Sigmoid colon (tissue), 7 donors: ENCODE measurements at regions of chr2 and their contacts with region 1.

Region 1: DNA sequence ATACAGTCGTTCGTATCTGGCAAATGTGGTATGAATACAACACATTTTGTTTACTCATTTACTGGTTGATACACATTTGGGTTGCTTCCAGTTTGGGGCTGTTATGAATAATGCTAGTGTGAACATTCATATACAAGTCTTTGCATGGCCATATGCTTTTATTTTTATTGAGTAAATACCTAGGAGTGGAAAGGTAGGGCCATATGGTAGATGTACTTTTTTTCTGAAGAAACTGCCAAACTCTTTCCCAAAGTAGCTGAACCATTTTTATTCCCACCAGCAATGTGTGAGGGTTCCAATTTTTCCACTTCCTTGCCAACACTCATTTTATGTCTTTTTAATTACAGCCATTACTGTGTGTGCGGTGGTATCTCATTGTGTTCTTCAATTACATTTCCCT is 496.2 kb upstream of the NRXN1 start:
- DNase-seq: no peak
- H3K4me3 ChIP-seq: no peak overlapping the region
- H3K27ac ChIP-seq: no peak overlapping the region
- H3K4me1 ChIP-seq: no peaks in the 10 kb centered on the region
- H3K27me3 ChIP-seq: no peaks in the 10 kb centered on the region
- CTCF ChIP-seq: no peak
- EP300 ChIP-seq: no peak
- POLR2A ChIP-seq: no peak

Region 2: DNA sequence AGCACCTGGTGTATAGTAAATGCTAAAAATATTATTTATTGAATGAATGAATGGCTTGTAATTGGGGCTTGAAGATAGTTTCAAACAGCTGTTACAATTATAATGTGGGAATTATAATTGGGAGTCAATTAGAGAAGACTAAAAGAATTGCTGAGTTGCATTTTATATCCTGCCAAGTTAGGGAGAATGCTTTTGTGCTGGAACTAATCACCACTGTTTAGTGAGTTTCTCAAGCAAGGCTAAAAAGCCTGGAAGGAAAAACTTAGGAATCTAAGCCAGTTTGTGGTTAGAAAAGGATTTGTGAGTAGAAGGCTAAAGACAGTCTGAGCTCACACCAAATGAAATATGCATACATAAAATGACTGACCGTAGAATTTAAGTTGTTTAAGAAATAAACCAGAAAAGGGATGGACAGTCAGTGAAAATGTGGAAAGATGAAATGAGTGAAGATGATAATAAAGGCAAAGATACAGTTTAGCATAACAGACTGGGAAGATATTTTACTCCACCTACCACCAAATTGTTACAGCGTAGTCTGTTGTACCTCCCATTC is 1726.2 kb before region 1 on chr2:
- intact Hi-C with region 1: loop called (anchors 5 kb)
- DNase-seq: no peak
- H3K4me3 ChIP-seq: no peak overlapping the region
- H3K27ac ChIP-seq: no peak overlapping the region
- H3K4me1 ChIP-seq: no peaks in the 10 kb centered on the region
- H3K27me3 ChIP-seq: no peaks in the 10 kb centered on the region
- CTCF ChIP-seq: no peak
- EP300 ChIP-seq: no peak
- POLR2A ChIP-seq: no peak

Region 3: DNA sequence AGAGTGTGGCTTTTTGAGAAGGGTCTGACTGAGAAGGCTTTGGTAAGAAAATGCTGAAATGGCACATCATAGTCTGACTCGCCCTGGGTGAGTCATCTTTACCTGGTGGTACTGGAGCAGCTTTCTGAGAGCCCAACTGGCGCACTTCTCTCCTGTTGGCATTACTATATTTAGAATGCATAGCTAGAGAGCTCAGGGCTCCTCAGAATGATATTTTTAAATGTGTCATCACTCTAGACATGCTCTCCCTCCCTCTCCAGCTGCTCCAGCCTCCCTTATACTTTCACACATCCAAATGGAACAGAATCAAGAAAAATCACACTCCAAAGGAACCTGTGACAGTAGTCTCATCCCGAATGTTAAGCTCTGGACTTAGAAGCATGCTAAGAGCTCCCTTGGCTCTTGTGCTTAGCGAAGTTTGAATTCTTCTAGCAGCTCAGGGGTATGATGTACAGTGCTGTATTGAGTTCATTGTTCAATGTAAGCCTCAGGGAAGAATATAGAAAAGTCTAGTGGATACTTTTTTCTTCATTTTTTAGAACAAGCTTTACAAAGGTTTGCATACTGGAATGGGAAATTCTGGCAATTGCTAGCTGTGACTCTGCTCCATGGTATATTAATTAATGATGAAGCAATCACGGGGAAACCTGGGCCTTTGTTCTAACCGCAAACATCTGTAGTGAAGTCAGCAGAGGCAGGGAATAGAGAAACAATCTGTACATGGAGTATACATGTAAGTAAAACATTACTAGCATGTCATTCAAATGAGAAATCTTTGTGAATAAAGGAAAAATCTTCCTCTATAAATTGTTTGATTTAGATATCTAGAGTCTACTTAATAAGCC is 255.0 kb after region 1 on chr2:
- intact Hi-C with region 1: no loop called
- DNase-seq: no peak
- H3K4me3 ChIP-seq: no peak overlapping the region
- H3K27ac ChIP-seq: no peak overlapping the region
- H3K4me1 ChIP-seq: no peaks in the 10 kb centered on the region
- H3K27me3 ChIP-seq: no peaks in the 10 kb centered on the region
- CTCF ChIP-seq: no peak
- EP300 ChIP-seq: no peak
- POLR2A ChIP-seq: no peak

Region 4: DNA sequence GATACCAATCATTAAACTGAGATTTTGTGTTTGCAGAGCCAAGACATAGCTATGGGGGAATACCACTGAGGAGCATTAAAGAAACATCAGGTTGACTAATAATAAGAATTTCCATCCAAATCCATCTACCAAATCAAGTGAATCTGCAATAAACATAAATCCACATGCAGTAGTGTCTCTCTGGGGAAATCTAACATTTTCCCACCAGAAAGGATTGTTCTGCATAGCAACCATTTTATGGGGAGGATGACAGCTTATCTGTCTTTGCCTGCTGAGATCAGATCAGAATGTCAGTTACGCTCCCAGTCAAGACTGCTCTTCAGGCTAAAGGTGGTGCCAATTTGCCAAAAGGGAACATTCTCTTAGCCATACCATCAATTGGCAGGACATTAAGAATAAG is 1140.6 kb after region 1 on chr2:
- intact Hi-C with region 1: no loop called
- DNase-seq: no peak
- H3K4me3 ChIP-seq: no peak overlapping the region
- H3K27ac ChIP-seq: no peak overlapping the region
- H3K4me1 ChIP-seq: no peaks in the 10 kb centered on the region
- H3K27me3 ChIP-seq: no peaks in the 10 kb centered on the region
- CTCF ChIP-seq: no peak
- EP300 ChIP-seq: no peak
- POLR2A ChIP-seq: no peak